ENCODE measurements at regions of chr12 and their contacts with region 1.

Region 1: DNA sequence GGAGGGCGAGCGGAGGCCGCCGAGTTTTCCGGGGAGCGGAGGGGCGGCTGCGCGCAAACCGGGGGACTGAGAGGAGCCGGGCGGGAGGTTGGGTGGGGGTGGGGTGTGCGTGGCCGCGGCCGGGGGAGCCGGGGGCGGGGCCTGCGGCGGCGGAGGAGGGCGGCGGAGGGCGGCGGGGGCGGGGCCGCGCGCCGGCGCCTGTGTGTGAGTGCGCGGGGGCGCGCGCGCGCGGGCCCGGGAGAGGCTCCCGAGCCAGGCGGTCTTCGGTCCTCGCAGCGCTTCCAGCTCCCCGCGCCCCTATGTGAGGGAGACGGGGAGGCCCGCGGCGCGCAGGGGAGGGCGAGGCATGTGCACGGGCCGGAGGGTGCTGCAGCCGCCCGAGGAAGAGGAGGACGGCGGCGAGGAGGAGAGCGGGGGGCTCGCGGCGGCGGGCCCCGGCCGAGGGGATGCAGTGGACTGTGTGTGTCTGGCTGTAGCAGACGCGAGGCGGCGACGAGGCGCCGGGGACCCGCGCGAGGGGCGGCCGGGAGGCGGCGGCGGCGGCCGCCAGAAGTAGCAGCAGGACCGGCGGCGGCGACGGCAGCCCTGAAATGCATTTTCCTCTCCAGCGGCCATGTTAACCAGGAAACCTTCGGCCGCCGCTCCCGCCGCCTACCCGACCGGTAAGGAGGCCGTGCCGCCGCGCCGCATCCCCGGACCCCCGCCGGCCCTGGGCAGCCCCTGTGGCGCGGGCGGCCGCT is at the start of gene DYRK2:
- DNase-seq: peak; percentile 91
- H3K4me3 Mint-ChIP-seq: peak within 1 kb of the TSS; percentile 97
- H3K27ac Mint-ChIP-seq: peak within 1 kb of the TSS; percentile 93
- H3K4me1 Mint-ChIP-seq: peaks cover 34% of the 10 kb centered on the region
- H3K27me3 Mint-ChIP-seq: peaks cover 6% of the 10 kb centered on the region
- total RNA-seq, gene DYRK2: 35.5 and 37.8 TPM in 2 replicates

Region 2: GRCh38 chr12:67275380-67275925 is 373.2 kb before region 1 on chr12:
- intact Hi-C with region 1: no loop called
- DNase-seq: no peak
- H3K4me3 Mint-ChIP-seq: no peak overlapping the region
- H3K27ac Mint-ChIP-seq: peak overlapping the region; percentile 30
- H3K4me1 Mint-ChIP-seq: peaks cover 48% of the 10 kb centered on the region
- H3K27me3 Mint-ChIP-seq: no peaks in the 10 kb centered on the region

Region 3: DNA sequence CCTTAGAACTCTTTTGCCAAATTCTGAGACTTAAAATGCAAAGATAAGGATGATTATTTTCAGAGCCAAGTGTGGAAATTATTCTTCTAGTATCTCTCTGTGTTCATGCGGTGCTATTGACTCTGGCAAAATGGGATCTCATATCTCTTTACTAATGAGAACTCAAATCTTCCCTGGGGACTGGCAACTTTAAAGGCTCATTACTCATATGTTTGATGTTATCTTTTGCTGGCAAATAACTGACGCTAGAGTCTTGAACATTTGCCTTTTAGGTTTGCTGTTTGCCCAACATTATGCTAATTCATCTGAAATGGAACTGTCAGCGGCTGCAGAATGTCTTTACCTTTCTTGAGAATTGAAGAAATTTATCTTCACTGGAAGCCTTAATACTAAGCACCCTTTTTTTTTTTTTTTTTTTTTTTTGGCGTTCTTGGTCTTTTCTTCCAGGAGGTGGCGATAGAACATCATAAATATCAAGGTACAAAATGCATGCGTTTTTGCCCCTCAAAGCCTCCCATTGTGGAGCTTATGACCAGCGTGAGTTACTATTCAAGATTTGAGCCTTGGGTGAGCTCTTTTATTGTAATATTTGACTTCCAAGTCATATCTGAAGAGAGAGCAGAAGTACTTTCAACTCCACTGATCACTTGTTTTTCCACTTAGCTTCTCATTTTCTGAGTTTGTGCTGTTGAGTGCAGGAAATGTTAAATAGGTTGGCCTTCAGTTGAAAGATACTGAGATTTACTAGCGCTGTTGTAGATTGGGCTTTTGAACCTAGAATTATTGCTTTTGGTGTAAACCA is 292.9 kb before region 1 on chr12:
- intact Hi-C with region 1: loop called (anchors 10 kb)
- DNase-seq: peak; percentile 71
- H3K4me3 Mint-ChIP-seq: no peak overlapping the region
- H3K27ac Mint-ChIP-seq: no peak overlapping the region
- H3K4me1 Mint-ChIP-seq: peaks cover 15% of the 10 kb centered on the region
- H3K27me3 Mint-ChIP-seq: no peaks in the 10 kb centered on the region

Region 4: GRCh38 chr12:67578976-67579661 is 69.6 kb before region 1 on chr12:
- intact Hi-C with region 1: loop called (anchors 2 kb)
- DNase-seq: peak; percentile 76
- H3K4me3 Mint-ChIP-seq: peak overlapping the region; percentile 17
- H3K27ac Mint-ChIP-seq: peak overlapping the region; percentile 52
- H3K4me1 Mint-ChIP-seq: peaks cover 24% of the 10 kb centered on the region
- H3K27me3 Mint-ChIP-seq: peaks cover 22% of the 10 kb centered on the region

Region 5: GRCh38 chr12:67630373-67631088 is 18.2 kb before region 1 on chr12:
- intact Hi-C with region 1: loop called (anchors 1 kb)
- DNase-seq: peak; percentile 96
- H3K4me3 Mint-ChIP-seq: peak overlapping the region; percentile 73
- H3K27ac Mint-ChIP-seq: peak overlapping the region; percentile 86
- H3K4me1 Mint-ChIP-seq: peaks cover 43% of the 10 kb centered on the region
- H3K27me3 Mint-ChIP-seq: peaks cover 2% of the 10 kb centered on the region

Region 6: GRCh38 chr12:67804168-67804567 is 155.5 kb after region 1 on chr12:
- intact Hi-C with region 1: loop called (anchors 2 kb)
- DNase-seq: peak; percentile 80
- H3K4me3 Mint-ChIP-seq: no peak overlapping the region
- H3K27ac Mint-ChIP-seq: no peak overlapping the region
- H3K4me1 Mint-ChIP-seq: peaks cover 11% of the 10 kb centered on the region
- H3K27me3 Mint-ChIP-seq: peaks cover 8% of the 10 kb centered on the region